Right ventricle myocardium inferior (tissue), 1 donor: ENCODE measurements at regions of chr11 and their contacts with region 1.

Region 1: GRCh38 chr11:110198031-110198729 is 98.2 kb downstream of the RDX start:
- DNase-seq: no peak
- ATAC-seq: no peak

Region 2: DNA sequence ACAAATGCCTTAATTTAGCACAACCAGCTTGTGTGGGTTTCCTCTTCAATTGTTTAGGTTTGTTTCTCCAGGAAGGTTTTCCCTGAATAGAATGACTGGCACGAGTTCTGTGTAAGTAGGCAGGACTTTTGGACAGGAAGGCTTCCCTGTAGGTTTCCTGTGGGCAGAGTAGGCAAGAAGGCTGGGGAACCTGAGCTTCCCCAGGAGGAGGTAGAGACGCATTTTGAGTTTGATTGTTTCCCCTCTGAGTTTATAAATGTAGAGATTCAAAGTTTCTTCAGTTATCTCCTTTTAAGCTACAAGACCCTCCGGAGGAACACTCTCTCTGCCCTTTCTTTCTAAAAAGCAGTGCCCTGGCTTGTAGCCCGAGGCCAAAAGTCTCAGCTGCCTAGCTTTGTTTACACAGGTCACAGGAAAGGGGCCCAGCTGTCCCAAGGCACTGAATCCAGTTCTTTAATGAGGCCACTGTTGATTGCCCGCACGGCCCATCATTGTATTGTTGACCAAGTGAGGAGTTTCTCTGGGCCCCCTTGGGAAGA is 164.9 kb after region 1 on chr11:
- intact Hi-C with region 1: loop called (anchors 1 kb)
- DNase-seq: no peak
- ATAC-seq: no peak

Region 3: DNA sequence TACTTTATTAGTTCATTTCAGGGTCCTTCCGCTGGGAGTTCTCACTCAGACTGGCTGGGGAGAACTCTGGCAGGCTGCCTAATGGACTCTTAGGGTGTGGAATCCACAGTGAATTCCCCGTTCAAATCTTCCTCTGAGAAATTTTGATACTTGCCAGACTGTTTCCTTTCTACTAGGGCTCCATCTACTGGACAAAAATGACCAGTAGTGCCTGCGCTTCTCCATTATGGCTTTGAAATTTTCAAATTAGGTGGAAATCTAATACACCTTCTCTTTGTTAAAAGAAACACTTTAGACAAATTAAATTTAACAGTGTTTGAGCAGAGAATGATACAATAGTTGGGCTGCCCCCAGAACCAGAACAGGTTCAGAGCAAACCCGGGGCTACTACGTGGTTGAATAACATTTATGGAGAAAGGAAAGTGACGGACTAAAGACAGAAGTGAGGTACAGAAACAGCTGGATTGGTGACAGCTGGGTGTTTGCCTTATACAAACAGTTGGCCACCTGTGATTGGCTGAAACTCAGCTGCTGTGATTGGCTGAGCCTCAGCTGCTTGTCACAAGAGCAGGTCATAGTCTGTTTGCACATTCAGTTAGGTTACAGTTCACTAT is 178.6 kb after region 1 on chr11:
- intact Hi-C with region 1: loop called (anchors 1 kb)
- DNase-seq: peak; percentile 68
- ATAC-seq: peak; percentile 83

Region 4: GRCh38 chr11:110429731-110430266 is 231.6 kb after region 1 on chr11 and contains the start of gene FDX1:
- intact Hi-C with region 1: loop called (anchors 1 kb)
- DNase-seq: peak; percentile 92
- ATAC-seq: peak; percentile 92
- total RNA-seq, gene FDX1: 22.5 TPM